K562 (cell line): ENCODE measurements at regions of chr18 and their contacts with region 1.

Region 1: DNA sequence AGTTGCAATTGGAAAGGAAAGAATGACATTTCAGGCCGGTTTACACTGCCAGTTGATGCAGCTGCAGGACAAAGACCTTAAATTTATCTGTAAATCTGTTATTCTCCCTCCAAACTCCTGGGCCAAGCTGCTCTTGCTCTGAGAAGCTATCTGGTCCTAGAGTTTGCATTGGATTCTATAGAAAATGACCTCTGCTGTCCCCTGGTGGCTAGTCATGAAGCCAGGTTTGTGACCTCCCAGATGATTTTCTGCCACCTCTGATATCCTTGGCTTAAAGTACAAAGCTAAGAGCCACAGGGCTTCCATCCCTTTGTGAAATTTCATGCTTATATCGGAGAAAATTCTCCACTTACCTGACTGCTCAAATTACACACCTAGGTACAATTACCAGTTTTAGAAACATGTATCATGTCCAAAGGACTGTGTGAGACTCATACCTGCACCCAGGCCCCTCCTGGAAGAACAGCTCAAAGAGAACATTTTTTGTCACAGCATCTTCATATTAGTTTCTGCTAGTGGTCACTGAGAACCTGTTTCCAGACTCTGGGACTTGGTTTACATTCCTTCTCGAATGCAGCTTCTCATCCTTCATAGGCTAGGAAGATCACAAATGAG is 28.9 kb upstream of the IER3IP1 start:
- DNase-seq: peak; percentile 23 to 56 (median 26)
- ATAC-seq: peak; percentile 82
- H3K4me3 ChIP-seq: no peak overlapping the region
- H3K27ac ChIP-seq: no peak overlapping the region
- H3K4me1 ChIP-seq: no peaks in the 10 kb centered on the region
- H3K27me3 ChIP-seq: no peaks in the 10 kb centered on the region
- CTCF ChIP-seq: peak; percentile 67 to 82 (median 71)
- EP300 ChIP-seq: no peak
- POLR2A ChIP-seq: no peak
- RAD21 ChIP-seq: peak; percentile 77 to 87

Region 2: DNA sequence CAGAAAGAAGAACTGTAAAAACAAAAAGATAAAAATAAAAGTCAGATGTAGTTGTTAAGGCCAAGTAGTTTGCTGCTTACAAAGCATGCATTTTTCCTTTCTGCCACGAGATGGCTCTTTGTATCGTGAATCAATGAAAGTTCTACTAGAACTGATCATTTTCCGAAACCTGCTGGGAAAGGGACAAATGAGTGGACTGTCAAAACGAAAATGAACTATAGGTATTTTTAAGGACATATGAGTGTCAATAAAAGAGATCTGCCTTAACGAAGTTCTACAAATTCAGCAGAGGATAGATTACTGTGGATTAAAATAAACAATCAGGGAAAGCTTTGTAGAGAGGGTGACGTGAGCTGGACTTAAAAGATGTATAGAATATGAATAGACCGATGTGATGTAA is 154.5 kb before region 1 on chr18:
- CTCF ChIA-PET with region 1: interaction called, 5 read pairs
- POLR2A ChIA-PET with region 1: no interaction called
- in situ Hi-C with region 1: no loop called
- intact Hi-C with region 1: loop called (anchors 2 kb)
- DNase-seq: peak in 3 of 4 experiments; percentile 11 to 35 (median 16)
- ATAC-seq: no peak
- H3K4me3 ChIP-seq: no peak overlapping the region
- H3K27ac ChIP-seq: no peak overlapping the region
- H3K4me1 ChIP-seq: no peaks in the 10 kb centered on the region
- H3K27me3 ChIP-seq: peaks cover 0 to 2% of the 10 kb centered on the region in 2 experiments; a peak in 1 of 5 replicates
- CTCF ChIP-seq: peak; percentile 34 to 55 (median 55); a peak in 5 of 6 replicates
- EP300 ChIP-seq: no peak
- POLR2A ChIP-seq: no peak
- RAD21 ChIP-seq: peak; percentile 46 to 73

Region 3: DNA sequence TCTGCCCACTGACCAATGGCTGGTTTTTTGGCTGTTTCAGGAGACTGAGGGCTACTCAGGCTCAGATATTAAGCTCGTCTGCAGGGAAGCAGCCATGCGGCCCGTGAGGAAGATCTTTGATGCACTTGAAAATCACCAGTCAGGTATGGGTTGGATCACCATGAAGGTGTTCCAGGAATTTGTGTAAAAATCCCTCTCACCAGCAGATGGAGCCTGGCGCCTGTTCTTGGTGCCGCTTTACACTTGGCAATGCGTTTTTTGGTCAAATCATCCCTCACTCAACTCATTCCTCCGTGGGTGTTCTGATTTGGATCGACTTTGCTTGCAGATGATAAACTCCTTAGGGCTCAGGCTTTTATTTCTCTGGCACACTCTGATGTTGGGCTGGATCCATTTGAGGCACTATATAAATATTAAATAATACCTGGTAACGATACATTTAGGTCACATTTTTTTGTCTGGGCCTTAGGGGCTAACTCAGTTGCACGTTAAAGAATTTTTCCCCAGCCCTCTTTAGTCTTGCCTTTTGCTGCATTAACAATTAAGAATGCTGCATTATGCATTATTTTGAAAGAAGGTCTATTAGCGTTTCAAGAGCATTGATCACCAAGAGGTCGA is 104.7 kb before region 1 on chr18:
- CTCF ChIA-PET with region 1: interaction called, 39 read pairs
- POLR2A ChIA-PET with region 1: interaction called, 3 read pairs
- in situ Hi-C with region 1: loop called (anchors 5 kb)
- intact Hi-C with region 1: loop called (anchors 1 kb)
- DNase-seq: peak; percentile 41 to 65 (median 48)
- ATAC-seq: peak; percentile 93
- H3K4me3 ChIP-seq: no peak overlapping the region
- H3K27ac ChIP-seq: no peak overlapping the region
- H3K4me1 ChIP-seq: no peaks in the 10 kb centered on the region
- H3K27me3 ChIP-seq: no peaks in the 10 kb centered on the region
- CTCF ChIP-seq: peak; percentile 75 to 80 (median 79)
- EP300 ChIP-seq: no peak
- POLR2A ChIP-seq: no peak
- RAD21 ChIP-seq: peak; percentile 72 to 88